HepG2 (cell line): ENCODE measurements at regions of chr2 and their contacts with region 1.

Region 1: GRCh38 chr2:26577434-26578112 is 63.6 kb downstream of the CIB4 start:
- DNase-seq: peak; percentile 35
- ATAC-seq: peak; percentile 84
- H3K4me3 ChIP-seq: no peak overlapping the region
- H3K27ac ChIP-seq: no peak overlapping the region
- H3K4me1 ChIP-seq: no peaks in the 10 kb centered on the region
- H3K27me3 ChIP-seq: peaks cover 31 to 91% of the 10 kb centered on the region in 2 experiments; a peak in 4 of 5 replicates
- CTCF ChIP-seq: peak; percentile 94
- EP300 ChIP-seq: no peak
- POLR2A ChIP-seq: no peak
- RAD21 ChIP-seq: peak; percentile 88

Region 2: GRCh38 chr2:26456440-26457250 is 120.9 kb before region 1 on chr2:
- CTCF ChIA-PET with region 1: no interaction called
- POLR2A ChIA-PET with region 1: no interaction called
- in situ Hi-C with region 1: no loop called
- intact Hi-C with region 1: no loop called
- DNase-seq: peak; percentile 82
- ATAC-seq: peak; percentile 85
- H3K4me3 ChIP-seq: peak overlapping the region; percentile 46 to 76 (median 50)
- H3K27ac ChIP-seq: peak overlapping the region; percentile 69
- H3K4me1 ChIP-seq: peaks cover 43% of the 10 kb centered on the region
- H3K27me3 ChIP-seq: no peaks in the 10 kb centered on the region; a peak in 1 of 5 replicates
- CTCF ChIP-seq: 0 out of 2 replicates have a peak, but pooled peaks have one; percentile 2
- EP300 ChIP-seq: peak; percentile 49 to 67; a peak in 2 of 4 replicates
- POLR2A ChIP-seq: peak in 1 of 2 experiments; percentile 29; a peak in 1 of 4 replicates
- RAD21 ChIP-seq: no peak

Region 3: GRCh38 chr2:26477911-26478253 is 99.7 kb before region 1 on chr2 and contains the start of gene OTOF:
- CTCF ChIA-PET with region 1: no interaction called
- POLR2A ChIA-PET with region 1: no interaction called
- in situ Hi-C with region 1: no loop called
- intact Hi-C with region 1: no loop called
- DNase-seq: no peak
- ATAC-seq: no peak
- H3K4me3 ChIP-seq: no peak within 1 kb of the TSS
- H3K27ac ChIP-seq: no peak within 1 kb of the TSS
- H3K4me1 ChIP-seq: peaks cover 33% of the 10 kb centered on the region
- H3K27me3 ChIP-seq: peaks cover 0 to 19% of the 10 kb centered on the region in 2 experiments; a peak in 3 of 5 replicates
- CTCF ChIP-seq: no peak
- EP300 ChIP-seq: no peak
- POLR2A ChIP-seq: no peak
- RAD21 ChIP-seq: no peak
- total RNA-seq, gene OTOF: 0.04 TPM in 1 of 2 replicates, not detected in the other

Region 4: GRCh38 chr2:26495705-26496297 is 81.8 kb before region 1 on chr2:
- CTCF ChIA-PET with region 1: no interaction called
- POLR2A ChIA-PET with region 1: no interaction called
- in situ Hi-C with region 1: no loop called
- intact Hi-C with region 1: loop called (anchors 10 kb)
- DNase-seq: peak; percentile 30
- ATAC-seq: peak; percentile 43; the same call in 2 of the 3 replicates
- H3K4me3 ChIP-seq: no peak overlapping the region
- H3K27ac ChIP-seq: no peak overlapping the region
- H3K4me1 ChIP-seq: no peaks in the 10 kb centered on the region
- H3K27me3 ChIP-seq: peaks cover 3 to 89% of the 10 kb centered on the region in 2 experiments; a peak in 4 of 5 replicates
- CTCF ChIP-seq: no peak
- EP300 ChIP-seq: no peak
- POLR2A ChIP-seq: no peak
- RAD21 ChIP-seq: no peak

Region 5: GRCh38 chr2:26521054-26521912 is 56.3 kb before region 1 on chr2:
- CTCF ChIA-PET with region 1: interaction called, 12 read pairs
- POLR2A ChIA-PET with region 1: no interaction called
- in situ Hi-C with region 1: loop called (anchors 5 kb)
- intact Hi-C with region 1: loop called (anchors 1 kb)
- DNase-seq: peak; percentile 18
- ATAC-seq: peak; percentile 67
- H3K4me3 ChIP-seq: no peak overlapping the region
- H3K27ac ChIP-seq: no peak overlapping the region
- H3K4me1 ChIP-seq: no peaks in the 10 kb centered on the region
- H3K27me3 ChIP-seq: peaks cover 6 to 72% of the 10 kb centered on the region in 2 experiments; a peak in 3 of 5 replicates
- CTCF ChIP-seq: peak; percentile 45
- EP300 ChIP-seq: no peak
- POLR2A ChIP-seq: no peak
- RAD21 ChIP-seq: no peak

Region 6: DNA sequence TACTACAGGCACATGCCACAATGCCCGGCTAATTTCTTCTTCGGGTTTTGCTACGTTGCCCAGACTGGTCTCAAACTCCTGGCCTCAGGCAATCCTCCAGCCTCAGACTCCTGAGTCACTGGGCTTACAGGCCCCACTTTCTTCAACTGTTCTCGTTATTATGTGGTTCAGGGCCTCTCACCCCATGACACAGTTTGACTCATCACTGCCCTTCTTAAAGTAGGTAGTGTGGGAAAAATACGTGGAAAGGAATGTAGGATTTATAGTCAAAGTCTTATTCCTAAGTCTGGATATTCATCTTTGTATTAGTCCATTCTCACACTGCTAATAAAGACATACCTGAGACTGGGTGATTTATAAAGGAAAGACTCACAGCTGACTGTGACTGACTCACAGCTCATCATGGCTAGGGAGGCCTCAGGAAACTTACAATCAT is 227.7 kb after region 1 on chr2:
- CTCF ChIA-PET with region 1: no interaction called
- POLR2A ChIA-PET with region 1: no interaction called
- in situ Hi-C with region 1: no loop called
- intact Hi-C with region 1: no loop called
- DNase-seq: no peak
- ATAC-seq: no peak
- H3K4me3 ChIP-seq: no peak overlapping the region
- H3K27ac ChIP-seq: no peak overlapping the region
- H3K4me1 ChIP-seq: no peaks in the 10 kb centered on the region
- H3K27me3 ChIP-seq: peaks cover 1 to 5% of the 10 kb centered on the region in 2 experiments; a peak in 2 of 5 replicates
- CTCF ChIP-seq: no peak
- EP300 ChIP-seq: no peak
- POLR2A ChIP-seq: no peak
- RAD21 ChIP-seq: no peak